Breast epithelium (tissue), 4 donors: ENCODE measurements at regions of chr21 and their contacts with region 1.

Region 1: GRCh38 chr21:26846036-26846931 is 1.1 kb upstream of the ADAMTS1 start:
- DNase-seq: peak; percentile 71 to 72
- H3K4me3 ChIP-seq: peak overlapping the region; percentile 69 to 94 (median 83)
- H3K27ac ChIP-seq: peak overlapping the region; percentile 85 to 98
- H3K4me1 ChIP-seq: no peaks in the 10 kb centered on the region
- H3K27me3 ChIP-seq: no peaks in the 10 kb centered on the region
- CTCF ChIP-seq: peak in 1 of 3 donors; percentile 31
- POLR2A ChIP-seq: peak; percentile 81

Region 2: GRCh38 chr21:26865857-26866256 is 19.6 kb after region 1 on chr21:
- intact Hi-C with region 1: no loop called
- DNase-seq: no peak
- H3K4me3 ChIP-seq: no peak overlapping the region
- H3K27ac ChIP-seq: no peak overlapping the region
- H3K4me1 ChIP-seq: no peaks in the 10 kb centered on the region
- H3K27me3 ChIP-seq: no peaks in the 10 kb centered on the region
- CTCF ChIP-seq: no peak
- POLR2A ChIP-seq: no peak

Region 3: GRCh38 chr21:26925636-26926035 is 79.4 kb after region 1 on chr21:
- intact Hi-C with region 1: no loop called
- DNase-seq: no peak
- H3K4me3 ChIP-seq: no peak overlapping the region
- H3K27ac ChIP-seq: no peak overlapping the region
- H3K4me1 ChIP-seq: no peaks in the 10 kb centered on the region
- H3K27me3 ChIP-seq: no peaks in the 10 kb centered on the region
- CTCF ChIP-seq: no peak
- POLR2A ChIP-seq: no peak

Region 4: DNA sequence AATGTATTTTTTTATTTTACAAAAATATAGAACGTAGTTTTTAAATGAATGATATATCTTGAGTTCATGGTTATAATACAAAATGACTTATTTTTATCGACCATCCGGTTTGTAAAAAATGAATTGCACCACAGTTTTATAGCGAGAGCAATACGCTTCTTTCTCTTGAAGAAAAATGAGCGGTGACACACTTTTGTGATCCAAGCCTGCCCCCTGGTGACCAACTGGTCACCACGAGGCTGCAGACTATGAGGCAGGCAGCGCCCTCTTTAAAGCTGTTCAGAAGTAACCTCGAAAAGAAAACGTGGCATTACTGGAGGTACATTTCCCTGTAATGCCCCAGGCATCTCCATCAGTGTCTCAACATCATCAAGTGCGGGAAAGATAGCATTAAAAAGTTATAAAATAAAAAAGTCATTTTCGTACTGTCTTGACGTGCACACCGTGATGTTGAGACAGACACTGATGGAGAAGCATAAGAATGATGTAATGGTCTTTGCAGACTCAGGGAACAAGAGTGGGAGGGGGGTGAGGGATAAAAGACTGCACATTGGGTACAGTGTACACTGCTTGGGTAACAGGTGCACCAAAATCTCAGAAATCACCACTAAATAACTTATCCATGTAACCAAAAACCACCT is 854.8 kb after region 1 on chr21:
- intact Hi-C with region 1: loop called (anchors 2 kb)
- DNase-seq: peak; percentile 76 to 80
- H3K4me3 ChIP-seq: no peak overlapping the region
- H3K27ac ChIP-seq: no peak overlapping the region
- H3K4me1 ChIP-seq: no peaks in the 10 kb centered on the region
- H3K27me3 ChIP-seq: no peaks in the 10 kb centered on the region
- CTCF ChIP-seq: peak; percentile 73 to 91 (median 86)
- POLR2A ChIP-seq: no peak